HepG2 (cell line): ENCODE measurements at regions of chr10 and their contacts with region 1.

Region 1: GRCh38 chr10:25016376-25017154 is at the start of gene THNSL1:
- DNase-seq: peak; percentile 97
- ATAC-seq: peak; percentile 99
- H3K4me3 ChIP-seq: peak within 1 kb of the TSS; percentile 64 to 84 (median 71)
- H3K27ac ChIP-seq: peak within 1 kb of the TSS; percentile 100
- H3K4me1 ChIP-seq: peaks cover 32% of the 10 kb centered on the region
- H3K27me3 ChIP-seq: no peaks in the 10 kb centered on the region
- CTCF ChIP-seq: no peak
- EP300 ChIP-seq: no peak; a peak in 1 of 4 replicates
- POLR2A ChIP-seq: peak; percentile 96 to 99
- RAD21 ChIP-seq: peak; percentile 53
- total RNA-seq, gene THNSL1: 3.8 and 7.3 TPM in 2 replicates

Region 2: GRCh38 chr10:24744946-24745345 is 271.6 kb before region 1 on chr10:
- CTCF ChIA-PET with region 1: no interaction called
- POLR2A ChIA-PET with region 1: no interaction called
- in situ Hi-C with region 1: no loop called
- intact Hi-C with region 1: no loop called
- DNase-seq: no peak
- ATAC-seq: no peak
- H3K4me3 ChIP-seq: no peak overlapping the region
- H3K27ac ChIP-seq: no peak overlapping the region
- H3K4me1 ChIP-seq: no peaks in the 10 kb centered on the region
- H3K27me3 ChIP-seq: no peaks in the 10 kb centered on the region
- CTCF ChIP-seq: no peak
- EP300 ChIP-seq: no peak
- POLR2A ChIP-seq: no peak
- RAD21 ChIP-seq: no peak

Region 3: GRCh38 chr10:24974976-24975375 is 41.6 kb before region 1 on chr10:
- CTCF ChIA-PET with region 1: no interaction called
- POLR2A ChIA-PET with region 1: no interaction called
- in situ Hi-C with region 1: no loop called
- intact Hi-C with region 1: loop called (anchors 5 kb)
- DNase-seq: peak; percentile 32
- ATAC-seq: peak; percentile 67
- H3K4me3 ChIP-seq: no peak overlapping the region
- H3K27ac ChIP-seq: no peak overlapping the region
- H3K4me1 ChIP-seq: peaks cover 23% of the 10 kb centered on the region
- H3K27me3 ChIP-seq: no peaks in the 10 kb centered on the region
- CTCF ChIP-seq: no peak
- EP300 ChIP-seq: no peak
- POLR2A ChIP-seq: no peak
- RAD21 ChIP-seq: no peak

Region 4: DNA sequence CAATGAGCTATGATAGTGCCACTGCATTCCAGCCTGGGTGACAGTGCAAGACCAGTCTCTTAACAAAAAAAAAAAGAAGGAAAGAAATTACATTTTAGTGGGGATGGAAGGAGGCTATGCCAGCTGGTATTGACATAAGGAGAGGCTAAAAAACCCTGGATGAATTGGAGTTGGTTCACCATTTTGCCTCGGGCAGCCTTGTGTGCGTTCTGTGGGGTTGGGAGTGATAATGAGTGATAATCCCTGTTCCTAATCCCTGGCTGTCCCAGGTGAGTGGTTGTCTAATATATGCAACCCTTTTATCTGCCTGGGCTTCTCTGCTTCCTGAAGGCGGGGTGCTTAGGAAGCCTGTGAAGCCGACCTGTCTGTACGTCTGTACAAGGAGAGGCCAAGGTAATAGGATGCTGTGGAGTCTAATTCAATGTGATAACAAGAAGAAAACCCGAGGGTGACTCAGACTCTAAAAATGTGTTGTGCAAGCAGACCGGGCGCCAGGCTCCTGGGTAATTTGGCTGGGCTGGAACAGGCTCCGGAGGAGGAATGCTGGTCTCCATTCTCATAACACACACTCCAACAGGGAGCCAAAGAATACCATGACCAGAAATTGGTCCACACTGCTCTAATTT is 43.3 kb after region 1 on chr10:
- CTCF ChIA-PET with region 1: no interaction called
- POLR2A ChIA-PET with region 1: interaction called, 11 read pairs
- in situ Hi-C with region 1: loop called (anchors 5 kb)
- intact Hi-C with region 1: loop called (anchors 5 kb)
- DNase-seq: peak; percentile 87
- ATAC-seq: peak; percentile 72
- H3K4me3 ChIP-seq: no peak overlapping the region
- H3K27ac ChIP-seq: no peak overlapping the region
- H3K4me1 ChIP-seq: peaks cover 47% of the 10 kb centered on the region
- H3K27me3 ChIP-seq: no peaks in the 10 kb centered on the region
- CTCF ChIP-seq: no peak
- EP300 ChIP-seq: peak in 1 of 2 experiments; percentile 57; a peak in 2 of 4 replicates
- POLR2A ChIP-seq: no peak
- RAD21 ChIP-seq: no peak